ENCODE measurements at regions of chr2 and their contacts with region 1.

Region 1: GRCh38 chr2:209334198-209335017 is 89.4 kb upstream of the MAP2 start:
- DNase-seq: peak; percentile 84
- H3K4me3 Mint-ChIP-seq: no peak overlapping the region
- H3K27ac Mint-ChIP-seq: no peak overlapping the region
- H3K4me1 Mint-ChIP-seq: no peaks in the 10 kb centered on the region
- H3K27me3 Mint-ChIP-seq: no peaks in the 10 kb centered on the region
- CTCF ChIP-seq: peak; percentile 94

Region 2: DNA sequence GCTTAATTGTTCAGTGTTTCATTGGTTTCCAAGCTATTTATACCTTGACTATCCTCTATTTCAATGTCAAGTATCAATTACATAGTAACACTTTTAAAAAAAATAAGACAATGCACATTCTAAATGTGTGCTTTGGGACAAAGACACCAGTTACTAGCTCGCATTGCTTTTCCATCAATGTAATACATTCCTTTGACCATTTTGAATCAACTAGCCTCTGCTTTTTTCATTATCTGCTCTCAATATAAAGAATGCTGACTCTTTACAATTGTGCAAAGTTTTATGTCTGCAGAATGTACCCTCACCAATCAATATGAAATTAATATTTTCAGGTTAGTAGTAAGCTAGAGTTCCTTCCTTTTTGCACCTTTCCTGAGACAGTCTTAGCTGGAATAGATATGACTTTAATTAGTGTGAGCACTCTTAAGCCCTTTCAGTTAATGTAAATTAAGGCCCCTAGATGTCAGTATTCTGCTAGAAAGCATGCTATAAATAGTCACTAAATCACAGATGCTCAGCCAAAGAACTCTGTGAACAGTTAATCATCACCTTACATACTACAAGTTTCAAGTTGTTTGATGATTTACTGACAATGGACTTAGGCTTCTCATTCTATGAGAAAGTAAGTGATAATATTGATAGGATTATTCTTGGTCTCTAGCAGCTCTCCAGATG is 514.3 kb before region 1 on chr2:
- CTCF ChIA-PET with region 1: interaction called, 8 read pairs
- POLR2A ChIA-PET with region 1: no interaction called
- intact Hi-C with region 1: loop called (anchors 2 kb)
- DNase-seq: peak; percentile 18
- H3K4me3 Mint-ChIP-seq: no peak overlapping the region
- H3K27ac Mint-ChIP-seq: no peak overlapping the region
- H3K4me1 Mint-ChIP-seq: no peaks in the 10 kb centered on the region
- H3K27me3 Mint-ChIP-seq: peaks cover 12% of the 10 kb centered on the region
- CTCF ChIP-seq: peak; percentile 30

Region 3: DNA sequence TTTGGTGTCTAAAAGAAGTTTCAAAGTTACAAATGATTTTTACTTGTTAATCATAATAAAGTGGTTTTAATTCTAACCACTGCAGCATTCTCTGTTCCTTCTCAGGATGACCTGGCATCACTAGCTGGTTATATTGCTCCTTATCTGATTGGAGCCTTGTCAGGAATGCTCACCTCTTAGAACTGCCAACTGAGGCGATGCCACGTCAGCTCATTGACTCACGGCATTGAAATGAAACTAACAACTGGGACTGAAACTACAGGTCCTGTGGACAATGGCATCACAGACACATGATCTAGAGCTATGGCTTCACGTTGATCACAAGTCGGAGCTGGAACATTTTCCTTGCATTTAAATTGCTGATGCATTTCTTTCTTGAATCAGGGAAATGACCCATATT is 34.5 kb after region 1 on chr2:
- CTCF ChIA-PET with region 1: interaction called, 34 read pairs
- POLR2A ChIA-PET with region 1: no interaction called
- intact Hi-C with region 1: no loop called
- DNase-seq: peak; percentile 97
- H3K4me3 Mint-ChIP-seq: peak overlapping the region; percentile 48
- H3K27ac Mint-ChIP-seq: peak overlapping the region; percentile 85
- H3K4me1 Mint-ChIP-seq: peaks cover 28% of the 10 kb centered on the region
- H3K27me3 Mint-ChIP-seq: no peaks in the 10 kb centered on the region
- CTCF ChIP-seq: no peak

Region 4: DNA sequence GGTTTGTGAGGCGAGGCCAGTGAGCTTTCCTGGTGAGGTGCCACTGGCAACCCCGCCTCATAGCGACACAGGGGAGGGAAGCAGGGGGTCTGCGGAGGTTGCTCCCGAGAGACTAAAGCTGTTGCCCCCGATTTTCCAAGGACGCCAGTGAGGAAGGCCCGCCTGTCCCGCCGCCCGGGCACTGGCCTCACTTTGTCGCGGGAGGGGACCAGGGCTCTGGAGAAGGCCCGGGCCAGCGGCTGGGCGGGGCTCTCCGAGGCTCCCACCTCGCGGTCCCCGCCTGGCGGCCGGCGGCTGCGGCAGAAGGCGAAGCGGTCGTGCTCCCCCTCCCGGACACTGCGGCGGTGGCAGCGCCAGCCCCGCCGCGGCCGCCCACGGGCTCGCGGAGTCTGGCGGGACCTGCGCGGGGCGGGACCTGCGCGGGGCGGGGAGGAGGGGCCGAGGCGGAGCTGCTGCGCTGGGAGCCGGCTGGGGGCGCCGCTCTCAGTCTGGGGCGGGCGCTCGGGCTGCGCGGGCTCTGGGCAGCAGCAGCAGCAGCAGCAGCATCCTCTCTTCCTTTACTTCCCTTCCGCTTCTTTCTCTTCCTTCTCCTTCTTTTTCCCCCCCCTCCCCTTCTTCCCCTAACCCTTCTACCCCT is 89.3 kb after region 1 on chr2 and contains the start of gene MAP2:
- CTCF ChIA-PET with region 1: interaction called, 161 read pairs
- POLR2A ChIA-PET with region 1: interaction called, 32 read pairs
- intact Hi-C with region 1: loop called (anchors 1 kb)
- DNase-seq: peak; percentile 77
- H3K4me3 Mint-ChIP-seq: peak within 1 kb of the TSS; percentile 81
- H3K27ac Mint-ChIP-seq: no peak within 1 kb of the TSS
- H3K4me1 Mint-ChIP-seq: peaks cover 18% of the 10 kb centered on the region
- H3K27me3 Mint-ChIP-seq: no peaks in the 10 kb centered on the region
- CTCF ChIP-seq: peak; percentile 87
- total RNA-seq, gene MAP2: 16.2 and 40.2 TPM in 2 replicates

Region 5: DNA sequence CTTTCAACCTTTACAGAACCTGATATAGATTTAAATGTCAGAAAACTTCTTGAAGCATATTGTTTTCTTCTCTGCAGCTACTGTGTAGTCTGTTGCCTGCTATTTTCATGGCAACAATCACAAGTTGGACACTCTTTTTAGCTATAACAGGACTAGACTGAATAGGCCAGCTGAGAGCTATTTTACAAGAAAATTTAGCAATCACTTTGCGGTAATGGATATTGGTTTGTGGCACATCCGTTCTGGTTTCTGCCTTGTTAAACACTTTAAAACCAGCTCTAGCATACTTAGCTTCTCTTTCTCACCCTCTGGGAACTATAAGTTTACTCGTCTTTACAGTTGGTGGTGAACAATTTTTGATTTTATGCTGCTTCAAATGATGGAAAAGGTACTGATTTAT is 215.2 kb after region 1 on chr2:
- CTCF ChIA-PET with region 1: interaction called, 108 read pairs
- POLR2A ChIA-PET with region 1: interaction called, 3 read pairs
- intact Hi-C with region 1: no loop called
- DNase-seq: no peak
- H3K4me3 Mint-ChIP-seq: no peak overlapping the region
- H3K27ac Mint-ChIP-seq: no peak overlapping the region
- H3K4me1 Mint-ChIP-seq: no peaks in the 10 kb centered on the region
- H3K27me3 Mint-ChIP-seq: no peaks in the 10 kb centered on the region
- CTCF ChIP-seq: no peak

Region 6: GRCh38 chr2:209577376-209578357 is 243.3 kb after region 1 on chr2:
- CTCF ChIA-PET with region 1: interaction called, 30 read pairs
- POLR2A ChIA-PET with region 1: no interaction called
- intact Hi-C with region 1: loop called (anchors 1 kb)
- DNase-seq: peak; percentile 45
- H3K4me3 Mint-ChIP-seq: no peak overlapping the region
- H3K27ac Mint-ChIP-seq: no peak overlapping the region
- H3K4me1 Mint-ChIP-seq: no peaks in the 10 kb centered on the region
- H3K27me3 Mint-ChIP-seq: no peaks in the 10 kb centered on the region
- CTCF ChIP-seq: peak; percentile 32